Activated CD4-positive, alpha-beta T cell treated with anti-CD3 and anti-CD28 coated beads, Interleukin-2, amount 10 ng/mL, durations not matched to agents 24 days and 14 days (primary cell): ENCODE measurements at regions of chr16 and their contacts with region 1.

Region 1: DNA sequence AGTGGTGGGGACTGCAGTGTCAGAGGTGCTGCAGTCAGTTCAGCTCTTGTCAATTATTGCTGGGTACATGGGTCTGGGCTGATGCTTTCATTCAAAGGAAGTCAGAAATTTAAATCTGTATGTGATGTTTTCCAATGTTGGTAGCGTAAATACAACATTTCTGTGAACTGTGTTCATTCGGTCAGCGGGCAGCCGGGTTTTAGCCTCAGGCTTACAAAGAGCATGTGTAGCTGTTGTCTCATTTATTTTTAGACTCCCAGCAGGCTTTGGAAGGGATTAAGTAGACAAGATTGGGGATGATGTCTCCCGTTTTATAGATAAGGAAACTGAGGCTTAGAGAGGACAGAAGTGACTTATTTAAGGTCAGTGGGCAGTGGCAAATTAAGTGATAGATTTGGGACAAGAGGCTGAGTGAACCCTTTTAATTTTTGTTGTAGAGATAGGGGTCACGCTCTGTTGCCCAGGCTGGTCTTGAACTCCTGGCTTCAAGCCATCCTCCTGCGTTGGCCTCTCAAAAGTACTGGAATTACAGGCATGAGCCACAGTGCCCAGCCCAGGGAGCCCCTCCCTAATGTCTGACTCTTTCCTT is 8.1 kb downstream of the AQP8 start:
- DNase-seq: no peak
- H3K4me3 Mint-ChIP-seq: no peak overlapping the region
- H3K27ac Mint-ChIP-seq: no peak overlapping the region
- H3K4me1 Mint-ChIP-seq: no peaks in the 10 kb centered on the region
- H3K27me3 Mint-ChIP-seq: no peaks in the 10 kb centered on the region

Region 2: GRCh38 chr16:24516900-24517669 is 707.7 kb before region 1 on chr16:
- intact Hi-C with region 1: loop called (anchors 10 kb)
- DNase-seq: peak; percentile 93
- H3K4me3 Mint-ChIP-seq: peak overlapping the region; percentile 42
- H3K27ac Mint-ChIP-seq: no peak overlapping the region
- H3K4me1 Mint-ChIP-seq: peaks cover 11% of the 10 kb centered on the region
- H3K27me3 Mint-ChIP-seq: peaks cover 8% of the 10 kb centered on the region

Region 3: GRCh38 chr16:25126820-25127232 is 98.0 kb before region 1 on chr16:
- intact Hi-C with region 1: loop called (anchors 1 kb)
- DNase-seq: peak; percentile 77
- H3K4me3 Mint-ChIP-seq: no peak overlapping the region
- H3K27ac Mint-ChIP-seq: peak overlapping the region; percentile 75
- H3K4me1 Mint-ChIP-seq: peaks cover 22% of the 10 kb centered on the region
- H3K27me3 Mint-ChIP-seq: no peaks in the 10 kb centered on the region